ENCODE measurements at regions of chr14 and their contacts with region 1.

Region 1: GRCh38 chr14:67674481-67675169 is at the start of gene VTI1B:
- DNase-seq: peak; percentile 75 to 91 (median 80)
- H3K4me3 ChIP-seq: peak within 1 kb of the TSS; percentile 97
- H3K27ac ChIP-seq: peak within 1 kb of the TSS; percentile 92 to 99
- H3K4me1 ChIP-seq: peaks cover 6% of the 10 kb centered on the region
- H3K27me3 ChIP-seq: no peaks in the 10 kb centered on the region
- CTCF ChIP-seq: peak in 1 of 3 donors; percentile 24
- EP300 ChIP-seq: no peak
- POLR2A ChIP-seq: peak; percentile 29
- total RNA-seq, gene VTI1B: 34.6 to 76.5 (median 64.7) TPM

Region 2: GRCh38 chr14:67387195-67387594 is 287.4 kb before region 1 on chr14:
- intact Hi-C with region 1: no loop called
- DNase-seq: no peak
- H3K4me3 ChIP-seq: no peak overlapping the region
- H3K27ac ChIP-seq: no peak overlapping the region
- H3K4me1 ChIP-seq: no peaks in the 10 kb centered on the region
- H3K27me3 ChIP-seq: no peaks in the 10 kb centered on the region
- CTCF ChIP-seq: no peak
- EP300 ChIP-seq: no peak
- POLR2A ChIP-seq: no peak

Region 3: GRCh38 chr14:67599698-67600561 is 74.7 kb before region 1 on chr14 and contains the start of gene PIGH:
- intact Hi-C with region 1: loop called in 1 of 4 experiments (anchors 5 kb)
- DNase-seq: peak; percentile 89 to 96 (median 93)
- H3K4me3 ChIP-seq: peak within 1 kb of the TSS; percentile 88
- H3K27ac ChIP-seq: peak within 1 kb of the TSS; percentile 91
- H3K4me1 ChIP-seq: peaks cover 3% of the 10 kb centered on the region
- H3K27me3 ChIP-seq: no peaks in the 10 kb centered on the region
- CTCF ChIP-seq: peak; percentile 62 to 82 (median 77)
- EP300 ChIP-seq: no peak
- POLR2A ChIP-seq: peak; percentile 93
- total RNA-seq, gene PIGH: 21.9 to 32.5 (median 30.2) TPM

Region 4: GRCh38 chr14:67610491-67610890 is 64.1 kb before region 1 on chr14:
- intact Hi-C with region 1: no loop called
- DNase-seq: no peak
- H3K4me3 ChIP-seq: no peak overlapping the region
- H3K27ac ChIP-seq: no peak overlapping the region
- H3K4me1 ChIP-seq: no peaks in the 10 kb centered on the region
- H3K27me3 ChIP-seq: no peaks in the 10 kb centered on the region
- CTCF ChIP-seq: no peak
- EP300 ChIP-seq: no peak
- POLR2A ChIP-seq: no peak

Measured in ovary (tissue), 10 donors.